B cell (primary cell): ENCODE measurements at regions of chr12 and their contacts with region 1.

Region 1: DNA sequence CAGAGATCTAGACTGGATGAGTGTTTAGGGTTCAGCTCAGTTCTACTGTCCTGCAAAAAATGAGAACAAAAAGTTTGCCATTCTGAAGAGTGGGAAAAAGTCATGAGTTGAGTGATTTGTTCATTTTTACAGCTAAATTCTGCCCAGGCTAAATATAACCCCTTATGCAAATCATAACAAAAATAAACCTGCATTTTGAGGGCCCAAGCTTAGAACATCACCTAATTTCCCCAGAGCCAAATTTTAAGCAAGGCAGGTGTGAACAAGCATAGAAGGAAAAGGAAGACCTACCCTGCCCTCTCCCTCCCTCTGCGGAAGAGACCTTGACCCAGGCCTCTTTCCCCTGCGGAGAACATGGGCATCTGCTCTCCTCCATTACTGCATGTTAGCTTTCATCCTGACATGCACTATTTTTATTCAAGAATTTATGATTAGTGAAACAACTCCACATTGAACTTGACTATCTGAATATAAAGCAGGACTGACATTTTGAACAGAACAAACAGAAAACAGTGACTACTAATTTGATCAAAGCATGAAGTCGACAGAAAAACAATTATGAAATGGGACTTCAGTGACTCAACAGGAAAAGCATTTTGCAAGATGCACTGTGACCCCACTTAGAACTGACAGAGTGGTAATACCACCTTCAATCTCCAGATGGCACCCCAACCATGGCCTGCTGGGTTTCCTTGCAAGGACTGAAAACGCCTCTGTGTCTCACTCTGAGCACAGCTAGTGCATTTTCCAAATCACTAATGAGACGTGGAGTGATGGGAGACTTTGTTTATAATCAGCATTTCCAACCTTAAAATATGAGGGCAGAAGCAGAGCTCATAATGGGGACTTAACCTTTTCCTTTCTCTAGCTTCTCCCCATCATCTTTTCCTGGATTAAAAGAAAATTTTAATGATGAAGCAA is 30.9 kb upstream of the SELPLG start:
- DNase-seq: peak; percentile 86
- ATAC-seq: peak; percentile 95
- H3K4me3 ChIP-seq: peak overlapping the region in 4 of 5 experiments; percentile 16 to 57 (median 30)
- H3K4me3 Mint-ChIP-seq: peak overlapping the region; percentile 66
- H3K27ac ChIP-seq: peak overlapping the region; percentile 62 to 77
- H3K27ac Mint-ChIP-seq: peak overlapping the region; percentile 73
- H3K4me1 ChIP-seq: peaks cover 52 to 53% of the 10 kb centered on the region in 2 donors
- H3K4me1 Mint-ChIP-seq: peaks cover 56% of the 10 kb centered on the region
- H3K27me3 ChIP-seq: no peaks in the 10 kb centered on the region
- H3K27me3 Mint-ChIP-seq: no peaks in the 10 kb centered on the region
- CTCF ChIP-seq: peak; percentile 90

Region 2: GRCh38 chr12:108430245-108430644 is 234.4 kb before region 1 on chr12:
- CTCF ChIA-PET with region 1: no interaction called
- POLR2A ChIA-PET with region 1: no interaction called
- intact Hi-C with region 1: no loop called
- DNase-seq: no peak
- ATAC-seq: no peak
- H3K4me3 ChIP-seq: no peak overlapping the region
- H3K4me3 Mint-ChIP-seq: no peak overlapping the region
- H3K27ac ChIP-seq: no peak overlapping the region
- H3K27ac Mint-ChIP-seq: no peak overlapping the region
- H3K4me1 ChIP-seq: no peaks in the 10 kb centered on the region
- H3K4me1 Mint-ChIP-seq: no peaks in the 10 kb centered on the region
- H3K27me3 ChIP-seq: peaks cover 0 to 4% (median 0%) of the 10 kb centered on the region in 4 experiments
- H3K27me3 Mint-ChIP-seq: peaks cover 18% of the 10 kb centered on the region
- CTCF ChIP-seq: no peak

Region 3: GRCh38 chr12:108618079-108618952 is 46.3 kb before region 1 on chr12:
- CTCF ChIA-PET with region 1: interaction called, 135 read pairs
- POLR2A ChIA-PET with region 1: interaction called, 7 read pairs
- intact Hi-C with region 1: loop called (anchors 1 kb)
- DNase-seq: peak; percentile 88
- ATAC-seq: peak; percentile 35
- H3K4me3 ChIP-seq: no peak overlapping the region
- H3K4me3 Mint-ChIP-seq: no peak overlapping the region
- H3K27ac ChIP-seq: peak overlapping the region; percentile 80 to 93
- H3K27ac Mint-ChIP-seq: peak overlapping the region; percentile 98
- H3K4me1 ChIP-seq: peaks cover 41 to 49% of the 10 kb centered on the region in 2 donors
- H3K4me1 Mint-ChIP-seq: peaks cover 69% of the 10 kb centered on the region
- H3K27me3 ChIP-seq: no peaks in the 10 kb centered on the region
- H3K27me3 Mint-ChIP-seq: no peaks in the 10 kb centered on the region
- CTCF ChIP-seq: peak; percentile 98

Region 4: DNA sequence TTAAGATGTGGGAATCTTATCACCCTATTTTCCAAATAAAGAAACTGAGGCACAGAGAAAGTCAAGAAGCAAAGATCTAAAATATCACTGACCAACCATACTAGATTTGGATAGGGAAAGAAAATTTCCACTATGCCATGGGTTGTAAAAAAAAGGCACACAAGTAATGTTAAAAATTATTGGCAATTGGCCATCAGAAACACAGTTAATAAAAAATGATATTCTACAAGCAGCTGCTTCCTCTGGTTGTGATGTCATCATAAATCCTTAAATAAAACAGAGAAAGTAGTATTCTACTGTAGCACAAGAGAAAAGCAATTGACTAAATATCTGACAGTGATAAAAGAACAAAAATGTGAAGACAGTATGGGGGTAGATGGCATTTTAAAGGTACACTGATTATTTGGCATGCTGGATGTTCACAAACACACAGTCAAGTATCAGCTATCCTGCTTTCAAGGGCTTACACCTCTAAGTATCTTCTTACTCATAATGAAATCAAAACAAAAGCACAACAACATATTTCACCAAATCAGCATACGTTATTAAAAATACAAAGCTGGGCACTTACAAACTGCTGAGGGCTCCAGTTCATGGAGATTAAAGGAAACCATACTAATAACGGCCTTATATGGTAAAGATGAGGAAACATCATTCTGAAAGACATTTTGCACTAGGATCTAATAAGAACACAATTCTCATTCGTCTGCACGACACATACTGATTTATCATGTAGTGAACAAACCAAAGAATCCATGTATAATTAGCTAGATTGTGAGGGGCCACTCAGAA is 21.1 kb after region 1 on chr12:
- CTCF ChIA-PET with region 1: interaction called, 23 read pairs
- POLR2A ChIA-PET with region 1: interaction called, 4 read pairs
- intact Hi-C with region 1: loop called (anchors 2 kb)
- DNase-seq: no peak
- ATAC-seq: no peak
- H3K4me3 ChIP-seq: no peak overlapping the region
- H3K4me3 Mint-ChIP-seq: no peak overlapping the region
- H3K27ac ChIP-seq: no peak overlapping the region
- H3K27ac Mint-ChIP-seq: no peak overlapping the region
- H3K4me1 ChIP-seq: peaks cover 15 to 17% of the 10 kb centered on the region in 2 donors
- H3K4me1 Mint-ChIP-seq: peaks cover 38% of the 10 kb centered on the region
- H3K27me3 ChIP-seq: no peaks in the 10 kb centered on the region
- H3K27me3 Mint-ChIP-seq: no peaks in the 10 kb centered on the region
- CTCF ChIP-seq: no peak

Region 5: DNA sequence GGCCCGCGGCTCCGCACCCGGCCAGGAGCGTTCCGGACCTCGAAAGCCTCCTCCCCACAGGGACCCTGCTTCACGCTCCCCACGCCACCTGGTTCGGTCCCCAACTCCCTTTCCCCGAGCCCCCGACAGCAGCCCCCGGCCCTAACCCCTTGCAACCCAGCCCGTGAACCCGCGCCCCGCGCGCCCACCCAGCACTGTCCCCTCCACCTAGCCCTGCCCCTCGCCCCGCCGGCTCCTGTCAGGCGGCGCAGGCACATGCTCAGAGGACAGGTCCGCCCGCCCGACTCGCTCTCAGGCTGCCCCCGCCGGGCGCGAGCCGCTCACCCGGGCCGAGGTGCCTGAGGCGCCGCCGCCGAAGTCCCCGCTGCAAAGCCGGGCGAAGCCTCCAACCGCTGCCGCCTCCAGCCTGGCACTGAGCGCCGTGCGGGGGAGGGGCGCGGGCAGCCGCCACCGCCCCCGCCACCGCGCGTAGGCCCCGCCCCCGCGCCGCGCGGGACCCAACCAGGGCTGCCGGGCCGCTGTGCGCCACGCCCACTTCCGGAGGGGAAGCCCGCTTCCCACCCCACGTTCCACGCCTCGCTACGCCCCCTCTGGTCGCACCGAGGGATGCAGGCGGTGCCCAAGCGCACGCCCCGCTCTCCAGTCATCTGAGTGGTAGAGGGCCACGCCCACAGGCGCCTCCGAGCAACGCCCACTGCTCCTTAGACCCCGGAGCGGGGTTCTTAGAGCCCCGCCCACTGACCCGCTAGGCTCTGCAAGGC is 66.7 kb after region 1 on chr12 and contains the start of gene CORO1C:
- CTCF ChIA-PET with region 1: interaction called, 16 read pairs
- POLR2A ChIA-PET with region 1: no interaction called
- intact Hi-C with region 1: loop called (anchors 1 kb)
- DNase-seq: peak; percentile 97
- ATAC-seq: peak; percentile 73
- H3K4me3 ChIP-seq: peak within 1 kb of the TSS; percentile 70 to 92 (median 86)
- H3K4me3 Mint-ChIP-seq: peak within 1 kb of the TSS; percentile 99
- H3K27ac ChIP-seq: peak within 1 kb of the TSS; percentile 80 to 92
- H3K27ac Mint-ChIP-seq: peak within 1 kb of the TSS; percentile 98
- H3K4me1 ChIP-seq: peaks cover 11 to 16% of the 10 kb centered on the region in 2 donors
- H3K4me1 Mint-ChIP-seq: peaks cover 51% of the 10 kb centered on the region
- H3K27me3 ChIP-seq: no peaks in the 10 kb centered on the region
- H3K27me3 Mint-ChIP-seq: no peaks in the 10 kb centered on the region
- CTCF ChIP-seq: peak; percentile 83
- total RNA-seq, gene CORO1C: 58.9 and 68.0 TPM in 2 replicates

Region 6: GRCh38 chr12:108950991-108951739 is 286.6 kb after region 1 on chr12:
- CTCF ChIA-PET with region 1: interaction called, 54 read pairs
- POLR2A ChIA-PET with region 1: no interaction called
- intact Hi-C with region 1: loop called (anchors 1 kb)
- DNase-seq: peak; percentile 85
- ATAC-seq: peak; percentile 73
- H3K4me3 ChIP-seq: no peak overlapping the region
- H3K4me3 Mint-ChIP-seq: no peak overlapping the region
- H3K27ac ChIP-seq: no peak overlapping the region
- H3K27ac Mint-ChIP-seq: no peak overlapping the region
- H3K4me1 ChIP-seq: peaks cover 0 to 4% of the 10 kb centered on the region in 2 donors
- H3K4me1 Mint-ChIP-seq: peaks cover 6% of the 10 kb centered on the region
- H3K27me3 ChIP-seq: peaks cover 0 to 5% (median 0%) of the 10 kb centered on the region in 4 experiments
- H3K27me3 Mint-ChIP-seq: peaks cover 9% of the 10 kb centered on the region
- CTCF ChIP-seq: peak; percentile 99